CD4-positive, alpha-beta memory T cell (primary cell): ENCODE measurements at regions of chr12 and their contacts with region 1.

Region 1: DNA sequence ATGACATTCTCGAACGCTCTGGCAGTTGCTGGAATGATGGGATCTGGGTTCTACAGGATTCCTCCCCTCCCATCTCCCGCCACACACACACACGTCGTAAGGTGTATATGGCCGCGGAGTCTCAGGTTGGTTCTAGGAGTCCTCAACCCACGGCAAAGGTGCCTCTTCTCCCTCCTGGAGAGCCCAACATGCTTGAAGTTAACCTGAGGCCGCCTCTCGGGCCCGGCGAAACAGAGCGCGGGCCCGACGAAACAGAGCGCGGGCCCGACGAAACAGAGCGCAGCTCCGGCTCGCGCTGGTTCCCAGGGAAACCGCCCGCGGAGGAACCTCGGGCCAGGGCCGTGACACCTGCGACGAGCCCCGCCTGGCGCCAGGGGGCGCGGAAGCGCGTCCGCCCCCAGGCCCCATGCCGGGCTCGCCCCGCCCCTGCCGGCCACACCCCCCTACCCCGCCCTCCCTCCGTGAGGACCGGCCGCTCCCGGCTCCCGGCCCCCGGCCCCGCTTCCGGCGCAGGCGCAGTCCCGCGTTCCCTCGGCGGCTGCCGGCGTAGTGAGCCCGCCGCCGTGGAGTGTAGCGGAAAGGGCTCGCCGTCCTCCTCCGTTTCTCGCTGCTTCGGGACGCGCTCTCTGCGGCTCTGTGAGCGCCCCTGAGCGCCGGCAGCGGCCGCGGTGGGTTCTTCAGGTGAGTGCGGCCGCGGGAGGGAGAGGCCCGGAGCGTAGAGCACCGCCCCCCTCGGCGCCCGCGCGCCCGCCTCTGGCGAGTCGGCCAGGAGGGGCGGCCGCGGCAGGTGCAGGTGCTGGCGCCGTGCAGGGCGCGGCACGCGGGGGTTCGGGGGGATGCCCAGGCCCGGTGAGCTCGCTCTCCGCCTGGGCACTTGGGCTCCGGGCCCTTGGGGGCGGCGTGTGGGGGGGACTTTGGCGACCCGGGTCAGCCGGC is at the start of gene RAB3IP:
- DNase-seq: peak; percentile 88 to 93 (median 89)
- H3K4me3 ChIP-seq: peak within 1 kb of the TSS; percentile 50 to 80
- H3K4me3 Mint-ChIP-seq: peak within 1 kb of the TSS; percentile 85 to 93 (median 87)
- H3K27ac ChIP-seq: peak within 1 kb of the TSS; percentile 74
- H3K27ac Mint-ChIP-seq: peak within 1 kb of the TSS; percentile 80 to 88 (median 85)
- H3K4me1 ChIP-seq: peaks cover 17% of the 10 kb centered on the region
- H3K4me1 Mint-ChIP-seq: peaks cover 14 to 32% (median 21%) of the 10 kb centered on the region in 4 donors
- H3K27me3 ChIP-seq: no peaks in the 10 kb centered on the region
- H3K27me3 Mint-ChIP-seq: peaks cover 3 to 6% of the 10 kb centered on the region in 2 donors
- total RNA-seq, gene RAB3IP: 38.6 to 40.3 TPM

Region 2: GRCh38 chr12:68932961-68933893 is 805.4 kb before region 1 on chr12 and contains the start of gene CPM:
- CTCF ChIA-PET with region 1: no interaction called
- POLR2A ChIA-PET with region 1: no interaction called
- intact Hi-C with region 1: loop called (anchors 10 kb)
- DNase-seq: peak; percentile 56 to 73 (median 70)
- H3K4me3 ChIP-seq: peak within 1 kb of the TSS; percentile 4 to 60
- H3K4me3 Mint-ChIP-seq: peak within 1 kb of the TSS; percentile 82 to 93 (median 89)
- H3K27ac ChIP-seq: no peak within 1 kb of the TSS
- H3K27ac Mint-ChIP-seq: peak within 1 kb of the TSS in 5 of 7 donors; percentile 14 to 78 (median 52)
- H3K4me1 ChIP-seq: peaks cover 13% of the 10 kb centered on the region
- H3K4me1 Mint-ChIP-seq: peaks cover 5 to 9% (median 8%) of the 10 kb centered on the region in 4 donors
- H3K27me3 ChIP-seq: peaks cover 8% of the 10 kb centered on the region
- H3K27me3 Mint-ChIP-seq: peaks cover 3 to 7% of the 10 kb centered on the region in 2 donors
- total RNA-seq, gene CPM: 2.0 to 3.1 TPM

Region 3: GRCh38 chr12:69239352-69239921 is 499.2 kb before region 1 on chr12 and contains the start of gene CPSF6:
- CTCF ChIA-PET with region 1: no interaction called
- POLR2A ChIA-PET with region 1: no interaction called
- intact Hi-C with region 1: loop called (anchors 2 kb)
- DNase-seq: peak; percentile 95 to 96 (median 95)
- H3K4me3 ChIP-seq: peak within 1 kb of the TSS; percentile 60 to 94
- H3K4me3 Mint-ChIP-seq: peak within 1 kb of the TSS; percentile 96 to 100 (median 98)
- H3K27ac ChIP-seq: peak within 1 kb of the TSS; percentile 89
- H3K27ac Mint-ChIP-seq: peak within 1 kb of the TSS; percentile 98 to 100 (median 99)
- H3K4me1 ChIP-seq: peaks cover 52% of the 10 kb centered on the region
- H3K4me1 Mint-ChIP-seq: peaks cover 36 to 57% (median 47%) of the 10 kb centered on the region in 4 donors
- H3K27me3 ChIP-seq: no peaks in the 10 kb centered on the region
- H3K27me3 Mint-ChIP-seq: no peaks in the 10 kb centered on the region
- total RNA-seq, gene CPSF6: 109 to 120 TPM

Region 4: DNA sequence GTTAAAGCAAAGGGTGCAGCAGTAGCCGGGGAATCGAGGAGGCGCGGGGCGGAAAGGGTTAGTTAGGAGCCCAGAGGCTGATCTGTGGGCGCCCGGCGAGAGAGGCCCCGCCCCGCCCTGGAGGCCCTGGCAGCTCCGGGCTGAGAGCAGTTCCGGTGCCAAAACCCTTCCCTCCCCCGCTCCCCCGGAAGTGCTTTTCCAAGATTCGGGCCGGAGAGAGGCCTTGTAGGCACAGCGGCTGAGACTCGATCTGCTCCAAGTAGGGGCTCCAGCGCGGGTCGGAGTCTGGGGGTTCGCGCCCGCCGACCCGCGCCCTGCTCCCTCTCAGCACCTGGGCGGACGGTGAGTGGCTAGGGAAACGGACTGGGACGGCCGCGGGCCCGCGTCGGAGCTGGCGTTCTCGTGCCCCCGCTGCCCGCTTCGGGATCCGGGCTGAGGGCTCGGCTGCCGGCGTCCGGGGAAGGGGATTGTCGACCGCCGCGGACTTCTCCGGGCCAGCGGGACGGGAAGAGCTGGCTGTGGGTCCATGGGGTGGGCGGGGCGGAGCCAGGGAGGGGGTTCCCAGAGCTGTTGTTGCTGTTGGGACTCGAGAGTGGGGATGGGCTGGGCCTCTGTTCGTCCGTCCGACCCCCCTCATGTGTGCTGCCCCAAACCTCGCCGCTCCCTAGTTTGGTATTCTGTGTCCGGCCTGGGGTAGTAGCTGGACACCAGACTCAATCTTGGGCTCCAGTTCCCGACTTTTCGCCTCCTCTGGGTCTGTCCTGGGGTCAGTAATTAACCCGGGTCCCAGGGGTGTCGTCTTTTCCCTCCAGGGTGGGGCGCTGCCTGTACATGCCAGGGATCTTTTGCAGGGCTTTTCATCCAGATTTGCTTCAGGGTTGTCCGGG is 268.2 kb before region 1 on chr12 and contains the start of gene FRS2:
- CTCF ChIA-PET with region 1: no interaction called
- POLR2A ChIA-PET with region 1: interaction called, 9 read pairs
- intact Hi-C with region 1: loop called (anchors 5 kb)
- DNase-seq: peak; percentile 78 to 87 (median 80)
- H3K4me3 ChIP-seq: peak within 1 kb of the TSS; percentile 71
- H3K4me3 Mint-ChIP-seq: peak within 1 kb of the TSS; percentile 96 to 99 (median 98)
- H3K27ac ChIP-seq: peak within 1 kb of the TSS; percentile 89
- H3K27ac Mint-ChIP-seq: peak within 1 kb of the TSS; percentile 81 to 99 (median 98)
- H3K4me1 ChIP-seq: peaks cover 42% of the 10 kb centered on the region
- H3K4me1 Mint-ChIP-seq: peaks cover 31 to 55% (median 45%) of the 10 kb centered on the region in 4 donors
- H3K27me3 ChIP-seq: no peaks in the 10 kb centered on the region
- H3K27me3 Mint-ChIP-seq: no peaks in the 10 kb centered on the region
- total RNA-seq, gene FRS2: 21.2 to 22.2 TPM

Region 5: GRCh38 chr12:69720750-69721149 is 17.9 kb before region 1 on chr12:
- CTCF ChIA-PET with region 1: no interaction called
- POLR2A ChIA-PET with region 1: no interaction called
- intact Hi-C with region 1: no loop called
- DNase-seq: no peak
- H3K4me3 ChIP-seq: no peak overlapping the region
- H3K4me3 Mint-ChIP-seq: no peak overlapping the region
- H3K27ac ChIP-seq: no peak overlapping the region
- H3K27ac Mint-ChIP-seq: no peak overlapping the region
- H3K4me1 ChIP-seq: no peaks in the 10 kb centered on the region
- H3K4me1 Mint-ChIP-seq: no peaks in the 10 kb centered on the region
- H3K27me3 ChIP-seq: no peaks in the 10 kb centered on the region
- H3K27me3 Mint-ChIP-seq: peaks cover 3 to 6% of the 10 kb centered on the region in 2 donors

Region 6: DNA sequence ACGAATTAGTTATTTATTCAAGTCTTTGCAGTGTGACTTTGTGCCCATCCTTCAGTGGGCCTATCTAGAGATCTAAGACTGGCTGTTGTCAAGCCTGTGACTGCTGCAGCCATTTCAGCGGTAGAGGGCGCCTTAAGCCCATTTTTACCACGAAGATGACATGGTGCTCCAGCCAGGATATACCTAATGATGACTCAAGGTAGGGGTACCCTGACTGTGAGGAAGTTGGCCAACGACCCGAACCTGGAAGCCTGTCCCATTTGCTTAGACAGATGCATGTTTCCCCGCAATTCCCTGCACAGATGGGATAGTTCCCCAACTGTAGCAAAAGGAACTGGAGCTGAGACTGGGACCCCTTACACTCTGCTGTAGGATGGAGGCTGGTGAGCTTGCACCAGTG is 41.3 kb after region 1 on chr12:
- CTCF ChIA-PET with region 1: no interaction called
- POLR2A ChIA-PET with region 1: no interaction called
- intact Hi-C with region 1: no loop called
- DNase-seq: no peak
- H3K4me3 ChIP-seq: no peak overlapping the region
- H3K4me3 Mint-ChIP-seq: no peak overlapping the region
- H3K27ac ChIP-seq: no peak overlapping the region
- H3K27ac Mint-ChIP-seq: no peak overlapping the region
- H3K4me1 ChIP-seq: no peaks in the 10 kb centered on the region
- H3K4me1 Mint-ChIP-seq: peaks cover 0 to 13% (median 6%) of the 10 kb centered on the region in 4 donors
- H3K27me3 ChIP-seq: no peaks in the 10 kb centered on the region
- H3K27me3 Mint-ChIP-seq: no peaks in the 10 kb centered on the region

Region 7: DNA sequence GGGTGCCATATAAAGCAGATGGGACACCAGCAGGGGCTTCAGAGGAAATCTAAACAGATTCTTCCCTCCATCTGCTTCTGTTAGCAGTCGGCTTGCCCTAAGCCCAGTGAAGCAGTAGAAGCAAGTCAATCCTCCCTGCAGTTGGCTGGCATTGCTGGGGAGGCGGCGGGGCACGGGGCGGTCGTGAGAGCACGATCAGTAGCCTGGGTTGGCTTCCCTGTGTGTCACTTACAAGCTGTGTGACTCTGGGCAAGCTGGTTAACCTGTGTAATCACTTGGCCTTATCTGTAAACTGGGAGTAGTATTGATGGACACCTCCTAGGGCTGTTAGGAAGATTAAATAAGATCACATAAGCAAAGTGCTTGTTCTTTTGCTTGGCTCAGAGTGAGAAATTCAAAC is 105.8 kb after region 1 on chr12:
- CTCF ChIA-PET with region 1: no interaction called
- POLR2A ChIA-PET with region 1: no interaction called
- intact Hi-C with region 1: no loop called
- DNase-seq: no peak
- H3K4me3 ChIP-seq: no peak overlapping the region
- H3K4me3 Mint-ChIP-seq: no peak overlapping the region
- H3K27ac ChIP-seq: no peak overlapping the region
- H3K27ac Mint-ChIP-seq: no peak overlapping the region
- H3K4me1 ChIP-seq: no peaks in the 10 kb centered on the region
- H3K4me1 Mint-ChIP-seq: no peaks in the 10 kb centered on the region
- H3K27me3 ChIP-seq: no peaks in the 10 kb centered on the region
- H3K27me3 Mint-ChIP-seq: peaks cover 8 to 13% of the 10 kb centered on the region in 2 donors

Region 8: GRCh38 chr12:70242695-70243509 is 504.3 kb after region 1 on chr12 and contains the start of gene CNOT2:
- CTCF ChIA-PET with region 1: no interaction called
- POLR2A ChIA-PET with region 1: no interaction called
- intact Hi-C with region 1: loop called (anchors 1 kb)
- DNase-seq: peak; percentile 88 to 94 (median 90)
- H3K4me3 ChIP-seq: peak within 1 kb of the TSS; percentile 88 to 93
- H3K4me3 Mint-ChIP-seq: peak within 1 kb of the TSS; percentile 96 to 100 (median 99)
- H3K27ac ChIP-seq: peak within 1 kb of the TSS; percentile 99
- H3K27ac Mint-ChIP-seq: peak within 1 kb of the TSS; percentile 98 to 100 (median 100)
- H3K4me1 ChIP-seq: peaks cover 61% of the 10 kb centered on the region
- H3K4me1 Mint-ChIP-seq: peaks cover 41 to 75% (median 54%) of the 10 kb centered on the region in 4 donors
- H3K27me3 ChIP-seq: no peaks in the 10 kb centered on the region
- H3K27me3 Mint-ChIP-seq: peaks cover 0 to 2% of the 10 kb centered on the region in 2 donors
- total RNA-seq, gene CNOT2: 120 to 121 TPM

Region 9: GRCh38 chr12:70719672-70720420 is 981.2 kb after region 1 on chr12:
- CTCF ChIA-PET with region 1: no interaction called
- POLR2A ChIA-PET with region 1: no interaction called
- intact Hi-C with region 1: loop called (anchors 5 kb)
- DNase-seq: peak in 3 of 5 donors; percentile 11 to 31 (median 12)
- H3K4me3 ChIP-seq: no peak overlapping the region
- H3K4me3 Mint-ChIP-seq: peak overlapping the region in 7 of 8 donors; percentile 28 to 80 (median 70)
- H3K27ac ChIP-seq: no peak overlapping the region
- H3K27ac Mint-ChIP-seq: no peak overlapping the region
- H3K4me1 ChIP-seq: peaks cover 5% of the 10 kb centered on the region
- H3K4me1 Mint-ChIP-seq: peaks cover 0 to 8% (median 4%) of the 10 kb centered on the region in 4 donors
- H3K27me3 ChIP-seq: no peaks in the 10 kb centered on the region
- H3K27me3 Mint-ChIP-seq: peaks cover 2 to 4% of the 10 kb centered on the region in 2 donors